ENCODE measurements at regions of chr9 and their contacts with region 1.

Region 1: DNA sequence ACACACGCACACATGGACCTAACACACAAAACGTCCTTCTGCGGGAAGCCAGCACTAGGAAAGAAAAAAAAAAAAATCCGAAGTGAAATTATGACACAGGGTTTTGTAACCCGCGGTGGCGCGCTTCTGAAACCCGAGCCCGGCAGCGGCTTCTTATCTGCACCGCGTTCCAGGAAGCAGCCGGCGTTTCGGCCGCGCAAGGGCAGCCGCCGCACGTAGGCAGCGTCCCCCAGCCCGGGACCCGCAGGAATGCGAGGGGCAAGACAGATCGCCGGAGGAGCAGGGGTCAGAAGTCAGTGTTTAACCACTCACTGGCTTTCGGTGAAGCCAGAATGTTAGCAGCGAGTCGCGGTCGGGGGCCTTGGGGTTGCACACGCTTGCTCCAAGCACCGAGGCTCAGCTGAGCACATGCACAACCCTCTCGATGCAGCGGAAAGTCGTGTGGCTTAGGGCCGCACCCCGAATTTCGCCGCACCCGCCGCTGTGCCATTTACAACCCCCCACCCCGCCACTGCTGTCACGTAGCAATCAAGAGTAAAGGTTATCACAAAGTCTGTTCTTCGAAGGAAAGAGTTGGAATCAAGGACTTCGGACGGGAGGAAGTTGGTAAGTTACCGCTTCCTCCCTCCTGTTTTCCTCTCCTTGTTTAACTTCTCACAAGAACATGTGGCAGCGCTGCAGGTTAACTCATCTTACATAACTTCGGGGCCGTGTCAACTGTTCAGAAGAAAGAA is 167.9 kb downstream of the AUH start:
- DNase-seq: peak; percentile 68 to 75 (median 71)
- H3K4me3 ChIP-seq: peak overlapping the region; percentile 38 to 56
- H3K4me3 Mint-ChIP-seq: peak overlapping the region; percentile 87 to 96 (median 91)
- H3K27ac ChIP-seq: no peak overlapping the region
- H3K27ac Mint-ChIP-seq: peak overlapping the region; percentile 84 to 95 (median 89)
- H3K4me1 ChIP-seq: peaks cover 30% of the 10 kb centered on the region
- H3K4me1 Mint-ChIP-seq: peaks cover 16 to 38% (median 23%) of the 10 kb centered on the region in 4 donors
- H3K27me3 ChIP-seq: no peaks in the 10 kb centered on the region
- H3K27me3 Mint-ChIP-seq: no peaks in the 10 kb centered on the region

Region 2: GRCh38 chr9:91150998-91151717 is 42.7 kb before region 1 on chr9:
- CTCF ChIA-PET with region 1: no interaction called
- POLR2A ChIA-PET with region 1: interaction called, 3 read pairs
- intact Hi-C with region 1: loop called (anchors 1 kb)
- DNase-seq: peak; percentile 70 to 83 (median 78)
- H3K4me3 ChIP-seq: peak overlapping the region in 1 of 2 donors; percentile 18
- H3K4me3 Mint-ChIP-seq: peak overlapping the region in 7 of 8 donors; percentile 18 to 74 (median 62)
- H3K27ac ChIP-seq: no peak overlapping the region
- H3K27ac Mint-ChIP-seq: peak overlapping the region; percentile 37 to 87 (median 67)
- H3K4me1 ChIP-seq: peaks cover 23% of the 10 kb centered on the region
- H3K4me1 Mint-ChIP-seq: peaks cover 29 to 46% (median 37%) of the 10 kb centered on the region in 4 donors
- H3K27me3 ChIP-seq: no peaks in the 10 kb centered on the region
- H3K27me3 Mint-ChIP-seq: no peaks in the 10 kb centered on the region

Region 3: DNA sequence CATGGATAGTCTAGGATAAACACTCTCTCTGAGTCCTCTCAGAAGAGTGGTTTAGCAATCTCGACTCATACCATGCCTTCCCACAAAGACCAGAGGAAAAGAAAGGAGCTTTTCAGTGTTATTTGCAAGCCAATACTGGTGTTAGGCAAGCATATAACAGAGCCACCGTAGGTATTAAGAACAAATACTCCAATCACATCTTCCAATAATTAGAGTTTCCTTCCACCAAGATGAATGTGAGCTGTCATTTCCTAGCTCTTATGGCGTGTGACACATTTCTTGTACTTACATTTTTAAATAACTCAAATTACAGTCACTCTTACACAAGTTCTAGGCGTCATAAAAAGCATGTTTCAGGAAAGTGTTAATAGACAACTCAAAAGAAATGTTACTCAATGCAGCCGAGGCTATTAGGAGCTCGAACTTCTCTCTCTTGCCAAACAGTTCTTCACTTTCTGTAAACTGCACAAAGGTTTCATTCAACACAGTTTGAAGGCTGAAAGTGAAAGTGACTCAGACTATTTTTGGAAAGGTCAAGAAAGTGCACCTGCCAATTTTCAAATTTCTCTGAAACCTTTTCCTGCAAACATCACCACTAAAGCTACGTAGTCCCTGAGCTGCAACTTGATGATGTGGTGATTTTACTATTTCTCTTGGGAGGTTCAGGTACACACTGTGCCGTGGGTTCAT is 14.0 kb after region 1 on chr9:
- CTCF ChIA-PET with region 1: interaction called, 3 read pairs
- POLR2A ChIA-PET with region 1: no interaction called
- intact Hi-C with region 1: loop called (anchors 2 kb)
- DNase-seq: peak in 3 of 5 donors; percentile 14 to 23 (median 17)
- H3K4me3 ChIP-seq: peak overlapping the region in 1 of 2 donors; percentile 3
- H3K4me3 Mint-ChIP-seq: peak overlapping the region; percentile 8 to 80 (median 65)
- H3K27ac ChIP-seq: no peak overlapping the region
- H3K27ac Mint-ChIP-seq: peak overlapping the region in 6 of 7 donors; percentile 0 to 84 (median 60)
- H3K4me1 ChIP-seq: peaks cover 32% of the 10 kb centered on the region
- H3K4me1 Mint-ChIP-seq: peaks cover 17 to 42% (median 33%) of the 10 kb centered on the region in 4 donors
- H3K27me3 ChIP-seq: no peaks in the 10 kb centered on the region
- H3K27me3 Mint-ChIP-seq: no peaks in the 10 kb centered on the region

Region 4: GRCh38 chr9:91361291-91362050 is 167.6 kb after region 1 on chr9 and contains the start of gene AUH:
- CTCF ChIA-PET with region 1: interaction called, 3 read pairs
- POLR2A ChIA-PET with region 1: interaction called, 5 read pairs
- intact Hi-C with region 1: loop called (anchors 5 kb)
- DNase-seq: peak; percentile 80 to 87 (median 85)
- H3K4me3 ChIP-seq: peak within 1 kb of the TSS; percentile 38 to 84
- H3K4me3 Mint-ChIP-seq: peak within 1 kb of the TSS; percentile 94 to 99 (median 98)
- H3K27ac ChIP-seq: peak within 1 kb of the TSS; percentile 77
- H3K27ac Mint-ChIP-seq: peak within 1 kb of the TSS; percentile 82 to 98 (median 94)
- H3K4me1 ChIP-seq: peaks cover 39% of the 10 kb centered on the region
- H3K4me1 Mint-ChIP-seq: peaks cover 33 to 56% (median 40%) of the 10 kb centered on the region in 4 donors
- H3K27me3 ChIP-seq: no peaks in the 10 kb centered on the region
- H3K27me3 Mint-ChIP-seq: no peaks in the 10 kb centered on the region
- total RNA-seq, gene AUH: 23.6 to 25.2 TPM